ENCODE measurements at regions of chr12 and their contacts with region 1.

Region 1: DNA sequence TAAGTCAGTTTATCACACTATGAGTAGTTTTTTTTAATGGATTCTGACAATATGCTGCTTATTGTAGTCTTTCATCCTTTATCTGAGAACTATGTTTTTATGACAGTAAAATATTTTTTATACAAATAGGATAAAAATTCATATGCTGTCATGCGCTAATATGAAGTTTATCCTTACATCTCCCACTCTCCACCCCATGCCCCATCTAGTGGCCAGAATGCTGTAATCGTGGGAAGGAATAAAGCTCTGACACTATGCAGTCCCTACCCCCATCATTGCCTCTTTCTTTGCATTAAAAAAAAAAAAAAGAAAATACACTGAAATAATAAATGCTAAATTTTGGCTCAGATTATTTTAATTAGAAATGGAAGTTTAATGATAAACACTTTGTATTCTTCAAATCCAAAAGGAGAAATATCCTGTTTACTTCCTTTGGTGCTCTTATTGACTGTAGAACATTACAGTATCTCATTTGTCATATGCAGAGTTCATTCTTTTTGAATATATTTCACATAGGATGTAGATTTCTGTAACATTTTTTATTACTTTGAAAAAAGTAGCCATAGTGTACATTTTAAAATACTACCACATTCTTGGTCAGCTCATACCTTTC is 145.9 kb upstream of the SLCO1C1 start:
- DNase-seq: no peak
- H3K4me3 ChIP-seq: no peak overlapping the region
- CTCF ChIP-seq: peak; percentile 69

Region 2: GRCh38 chr12:19712041-19712440 is 837.2 kb before region 1 on chr12:
- CTCF ChIA-PET with region 1: no interaction called
- POLR2A ChIA-PET with region 1: no interaction called
- DNase-seq: peak; percentile 67
- H3K4me3 ChIP-seq: no peak overlapping the region
- CTCF ChIP-seq: no peak

Region 3: GRCh38 chr12:20483776-20484175 is 65.4 kb before region 1 on chr12:
- CTCF ChIA-PET with region 1: no interaction called
- POLR2A ChIA-PET with region 1: no interaction called
- DNase-seq: no peak
- H3K4me3 ChIP-seq: no peak overlapping the region
- CTCF ChIP-seq: no peak

Region 4: GRCh38 chr12:20561871-20562270 is 12.7 kb after region 1 on chr12:
- CTCF ChIA-PET with region 1: interaction called, 21 read pairs
- POLR2A ChIA-PET with region 1: no interaction called
- DNase-seq: no peak
- H3K4me3 ChIP-seq: no peak overlapping the region
- CTCF ChIP-seq: no peak

Measured in AG04449 (cell line).